ENCODE measurements at regions of chr12 and their contacts with region 1.

Region 1: DNA sequence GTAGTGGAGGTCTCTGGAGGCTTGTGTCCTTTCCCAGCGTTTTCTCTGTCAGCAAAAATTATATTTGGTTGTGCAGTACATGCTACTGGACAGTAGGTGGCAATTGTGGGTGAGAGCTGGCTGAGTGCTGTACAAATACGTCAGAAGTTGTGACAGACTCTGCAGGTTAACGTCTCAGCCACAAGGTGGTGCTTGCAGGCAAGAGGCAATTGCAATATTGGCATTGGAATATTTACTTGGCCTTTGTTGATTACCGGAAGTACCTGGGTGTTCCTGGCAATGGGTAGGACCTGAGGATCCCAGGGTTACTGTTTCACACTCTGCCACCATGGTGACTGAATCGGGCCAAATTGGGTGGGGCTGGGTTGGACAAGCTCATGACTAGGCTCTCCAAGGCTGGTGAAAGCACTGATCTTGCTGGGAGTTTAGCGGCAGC is 333.9 kb upstream of the LMO3 start:
- DNase-seq: peak; percentile 26
- ATAC-seq: peak; percentile 99
- H3K4me3 ChIP-seq: no peak overlapping the region
- H3K27ac ChIP-seq: no peak overlapping the region
- H3K4me1 ChIP-seq: no peaks in the 10 kb centered on the region
- H3K27me3 ChIP-seq: no peaks in the 10 kb centered on the region
- CTCF ChIP-seq: peak; percentile 78 to 86 (median 84)
- EP300 ChIP-seq: no peak
- POLR2A ChIP-seq: no peak
- RAD21 ChIP-seq: peak; percentile 66

Region 2: GRCh38 chr12:16949871-16950667 is 10.2 kb after region 1 on chr12:
- CTCF ChIA-PET with region 1: interaction called, 12 read pairs
- POLR2A ChIA-PET with region 1: no interaction called
- RAD21 ChIA-PET with region 1: no interaction called
- SMC1A ChIA-PET with region 1: interaction called, 5 read pairs
- in situ Hi-C with region 1: no loop called
- intact Hi-C with region 1: no loop called
- DNase-seq: no peak
- ATAC-seq: no peak
- H3K4me3 ChIP-seq: no peak overlapping the region
- H3K27ac ChIP-seq: no peak overlapping the region
- H3K4me1 ChIP-seq: no peaks in the 10 kb centered on the region
- H3K27me3 ChIP-seq: no peaks in the 10 kb centered on the region; a peak in 1 of 4 replicates
- CTCF ChIP-seq: no peak
- EP300 ChIP-seq: no peak
- POLR2A ChIP-seq: no peak
- RAD21 ChIP-seq: no peak

Region 3: GRCh38 chr12:17642340-17642650 is 702.4 kb after region 1 on chr12:
- CTCF ChIA-PET with region 1: interaction called, 8 read pairs
- POLR2A ChIA-PET with region 1: no interaction called
- RAD21 ChIA-PET with region 1: interaction called, 3 read pairs
- SMC1A ChIA-PET with region 1: no interaction called
- in situ Hi-C with region 1: no loop called
- intact Hi-C with region 1: loop called (anchors 2 kb)
- DNase-seq: no peak
- ATAC-seq: no peak
- H3K4me3 ChIP-seq: no peak overlapping the region
- H3K27ac ChIP-seq: no peak overlapping the region
- H3K4me1 ChIP-seq: no peaks in the 10 kb centered on the region
- H3K27me3 ChIP-seq: no peaks in the 10 kb centered on the region; a peak in 1 of 4 replicates
- CTCF ChIP-seq: no peak
- EP300 ChIP-seq: no peak
- POLR2A ChIP-seq: no peak
- RAD21 ChIP-seq: no peak

Region 4: GRCh38 chr12:17992002-17992656 is 1052.2 kb after region 1 on chr12:
- CTCF ChIA-PET with region 1: interaction called, 6 read pairs
- POLR2A ChIA-PET with region 1: no interaction called
- RAD21 ChIA-PET with region 1: no interaction called
- SMC1A ChIA-PET with region 1: no interaction called
- in situ Hi-C with region 1: loop called (anchors 25 kb)
- intact Hi-C with region 1: loop called (anchors 5 kb)
- DNase-seq: peak; percentile 15
- ATAC-seq: peak; percentile 82
- H3K4me3 ChIP-seq: no peak overlapping the region
- H3K27ac ChIP-seq: no peak overlapping the region
- H3K4me1 ChIP-seq: no peaks in the 10 kb centered on the region
- H3K27me3 ChIP-seq: no peaks in the 10 kb centered on the region
- CTCF ChIP-seq: peak; percentile 60 to 69 (median 68)
- EP300 ChIP-seq: no peak
- POLR2A ChIP-seq: no peak
- RAD21 ChIP-seq: peak; percentile 67

Measured in GM12878 (cell line).